CD4-positive, alpha-beta memory T cell (primary cell): ENCODE measurements at regions of chr16 and their contacts with region 1.

Region 1: DNA sequence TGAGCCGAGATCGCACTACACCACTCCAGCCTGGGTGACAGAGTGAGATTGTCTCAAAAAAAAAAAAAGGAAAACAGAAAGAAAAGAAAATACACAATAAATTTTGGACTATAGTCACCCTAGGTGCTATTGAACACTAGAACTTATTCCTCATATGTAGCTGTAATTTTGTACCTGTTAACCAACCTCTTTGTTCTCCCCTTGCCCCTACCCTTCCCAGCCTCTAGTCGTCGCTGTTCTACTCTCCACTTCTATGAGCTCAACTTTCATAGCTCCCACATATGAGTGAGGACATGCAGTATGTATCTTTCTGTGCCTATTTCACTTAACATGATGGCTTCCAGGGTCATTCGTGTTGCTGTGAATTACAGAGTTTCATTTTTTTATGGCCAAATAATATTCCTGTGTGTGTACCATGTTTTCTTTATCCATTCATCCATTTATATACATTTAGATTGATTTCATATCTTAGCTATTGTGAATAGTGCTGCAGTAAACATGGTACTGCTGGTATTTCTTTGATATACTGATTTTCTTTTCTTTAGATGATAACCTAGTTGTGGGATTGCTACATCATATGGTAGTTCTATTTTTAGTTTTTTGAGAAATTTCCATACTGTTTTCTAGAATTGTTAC is 28.3 kb downstream of the VPS35L start:
- DNase-seq: peak in 4 of 5 donors; percentile 28 to 38 (median 30)
- H3K4me3 ChIP-seq: no peak overlapping the region
- H3K4me3 Mint-ChIP-seq: no peak overlapping the region
- H3K27ac ChIP-seq: no peak overlapping the region
- H3K27ac Mint-ChIP-seq: peak overlapping the region in 1 of 7 donors; percentile 43
- H3K4me1 ChIP-seq: no peaks in the 10 kb centered on the region
- H3K4me1 Mint-ChIP-seq: peaks cover 0 to 3% (median 0%) of the 10 kb centered on the region in 4 donors
- H3K27me3 ChIP-seq: no peaks in the 10 kb centered on the region
- H3K27me3 Mint-ChIP-seq: no peaks in the 10 kb centered on the region

Region 2: DNA sequence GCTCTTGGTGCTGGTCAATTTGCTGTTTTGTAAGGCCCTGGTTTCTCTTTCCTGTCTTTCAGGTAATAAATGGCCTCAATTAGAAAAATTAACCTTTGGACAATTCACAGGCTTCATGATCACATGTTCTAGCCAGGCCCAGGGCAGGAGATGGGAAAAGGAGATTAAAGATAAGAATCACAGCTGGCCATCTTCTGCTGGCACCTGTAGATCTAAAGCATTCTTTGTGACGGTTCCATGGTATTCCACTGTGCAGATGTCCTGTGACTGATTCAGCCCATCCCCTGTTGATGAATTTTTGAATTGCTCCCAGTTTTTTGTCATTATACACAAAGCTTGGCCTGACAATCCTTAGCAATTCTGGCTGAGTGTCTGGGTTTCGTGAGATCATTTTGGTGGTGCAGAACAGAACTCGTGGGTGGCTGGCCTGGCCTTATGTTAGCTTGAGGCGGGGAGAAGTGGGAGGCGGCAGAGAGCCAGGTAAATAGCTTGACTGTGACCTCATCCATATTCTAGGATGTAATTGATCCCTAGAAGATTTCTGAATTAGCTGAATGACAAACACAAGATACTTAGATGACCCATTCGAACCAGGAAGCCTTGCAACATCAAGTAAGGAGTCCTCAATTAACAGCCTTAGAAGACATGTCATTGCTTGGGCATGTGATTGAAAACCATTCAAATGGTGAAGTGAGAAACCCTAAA is 152.0 kb before region 1 on chr16:
- CTCF ChIA-PET with region 1: no interaction called
- POLR2A ChIA-PET with region 1: no interaction called
- intact Hi-C with region 1: no loop called
- DNase-seq: no peak
- H3K4me3 ChIP-seq: no peak overlapping the region
- H3K4me3 Mint-ChIP-seq: no peak overlapping the region
- H3K27ac ChIP-seq: no peak overlapping the region
- H3K27ac Mint-ChIP-seq: no peak overlapping the region
- H3K4me1 ChIP-seq: no peaks in the 10 kb centered on the region
- H3K4me1 Mint-ChIP-seq: peaks cover 0 to 3% (median under 1%) of the 10 kb centered on the region in 4 donors
- H3K27me3 ChIP-seq: no peaks in the 10 kb centered on the region
- H3K27me3 Mint-ChIP-seq: peaks cover 5 to 6% of the 10 kb centered on the region in 2 donors

Region 3: DNA sequence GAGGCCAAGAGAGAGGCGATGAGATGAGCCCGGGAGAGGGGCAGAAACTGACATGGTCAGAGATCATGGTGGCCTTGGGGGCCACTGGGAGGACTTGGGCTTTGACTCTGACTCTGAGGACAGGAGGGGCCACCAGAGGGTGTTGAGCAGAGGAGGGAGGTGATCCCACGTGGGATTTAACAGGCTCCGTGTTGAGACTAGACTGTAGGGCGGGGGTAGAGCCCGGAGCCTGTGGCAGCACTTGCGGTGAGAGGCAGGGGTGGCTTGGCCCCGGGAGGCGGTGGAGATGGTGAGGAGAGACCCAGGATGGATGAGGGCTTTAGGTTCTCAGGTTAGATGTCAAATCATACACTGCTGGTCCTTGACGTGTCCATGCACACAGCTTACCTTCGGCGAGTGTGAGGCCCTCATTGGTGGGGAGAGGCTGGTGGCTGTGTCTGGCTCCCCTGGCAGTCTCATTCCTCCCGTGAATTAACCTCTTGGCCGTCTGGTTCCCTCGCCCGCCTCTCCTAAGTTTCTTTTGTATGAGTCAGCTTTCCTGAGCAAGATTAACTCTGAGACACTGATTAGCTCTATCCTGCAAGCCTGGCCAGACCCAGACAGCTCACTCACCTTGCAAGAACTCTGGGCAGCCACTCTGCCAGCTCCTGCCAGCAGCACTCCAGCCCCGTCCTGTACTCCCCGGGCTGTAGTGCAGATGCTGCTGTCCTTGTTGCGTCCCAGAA is 11.4 kb after region 1 on chr16:
- CTCF ChIA-PET with region 1: interaction called, 35 read pairs
- POLR2A ChIA-PET with region 1: no interaction called
- intact Hi-C with region 1: no loop called
- DNase-seq: no peak
- H3K4me3 ChIP-seq: no peak overlapping the region
- H3K4me3 Mint-ChIP-seq: no peak overlapping the region
- H3K27ac ChIP-seq: no peak overlapping the region
- H3K27ac Mint-ChIP-seq: peak overlapping the region in 1 of 7 donors; percentile 8
- H3K4me1 ChIP-seq: no peaks in the 10 kb centered on the region
- H3K4me1 Mint-ChIP-seq: no peaks in the 10 kb centered on the region
- H3K27me3 ChIP-seq: no peaks in the 10 kb centered on the region
- H3K27me3 Mint-ChIP-seq: no peaks in the 10 kb centered on the region

Region 4: DNA sequence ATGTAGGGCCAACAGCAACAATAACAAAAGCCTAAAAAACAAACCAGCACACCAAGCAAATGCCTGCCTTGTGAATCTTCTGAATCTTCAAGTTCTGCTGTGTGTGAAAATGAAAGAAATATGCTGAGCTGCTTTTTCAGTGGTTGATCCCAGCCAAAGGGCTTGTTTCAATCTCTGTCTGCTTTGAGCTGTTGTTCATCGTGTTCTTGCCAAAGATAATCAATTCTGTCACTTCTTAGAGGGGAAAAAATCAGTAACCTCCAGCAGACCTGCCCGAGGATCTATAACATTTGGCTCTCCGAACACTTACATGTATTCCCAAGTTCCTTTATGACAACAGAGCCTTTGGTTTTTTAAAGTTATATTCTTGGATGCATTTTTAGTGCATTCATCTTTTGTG is 37.7 kb after region 1 on chr16:
- CTCF ChIA-PET with region 1: no interaction called
- POLR2A ChIA-PET with region 1: no interaction called
- intact Hi-C with region 1: no loop called
- DNase-seq: no peak
- H3K4me3 ChIP-seq: no peak overlapping the region
- H3K4me3 Mint-ChIP-seq: no peak overlapping the region
- H3K27ac ChIP-seq: no peak overlapping the region
- H3K27ac Mint-ChIP-seq: no peak overlapping the region
- H3K4me1 ChIP-seq: no peaks in the 10 kb centered on the region
- H3K4me1 Mint-ChIP-seq: no peaks in the 10 kb centered on the region
- H3K27me3 ChIP-seq: no peaks in the 10 kb centered on the region
- H3K27me3 Mint-ChIP-seq: no peaks in the 10 kb centered on the region

Region 5: GRCh38 chr16:19886073-19886941 is 302.5 kb after region 1 on chr16:
- CTCF ChIA-PET with region 1: interaction called, 59 read pairs
- POLR2A ChIA-PET with region 1: no interaction called
- intact Hi-C with region 1: loop called (anchors 1 kb)
- DNase-seq: peak; percentile 76 to 79 (median 76)
- H3K4me3 ChIP-seq: peak overlapping the region in 1 of 2 donors; percentile 9
- H3K4me3 Mint-ChIP-seq: peak overlapping the region; percentile 79 to 91 (median 86)
- H3K27ac ChIP-seq: no peak overlapping the region
- H3K27ac Mint-ChIP-seq: peak overlapping the region in 3 of 7 donors; percentile 60 to 89 (median 67)
- H3K4me1 ChIP-seq: peaks cover 24% of the 10 kb centered on the region
- H3K4me1 Mint-ChIP-seq: peaks cover 15 to 30% (median 23%) of the 10 kb centered on the region in 4 donors
- H3K27me3 ChIP-seq: peaks cover 12% of the 10 kb centered on the region
- H3K27me3 Mint-ChIP-seq: peaks cover 7 to 27% of the 10 kb centered on the region in 2 donors

Region 6: DNA sequence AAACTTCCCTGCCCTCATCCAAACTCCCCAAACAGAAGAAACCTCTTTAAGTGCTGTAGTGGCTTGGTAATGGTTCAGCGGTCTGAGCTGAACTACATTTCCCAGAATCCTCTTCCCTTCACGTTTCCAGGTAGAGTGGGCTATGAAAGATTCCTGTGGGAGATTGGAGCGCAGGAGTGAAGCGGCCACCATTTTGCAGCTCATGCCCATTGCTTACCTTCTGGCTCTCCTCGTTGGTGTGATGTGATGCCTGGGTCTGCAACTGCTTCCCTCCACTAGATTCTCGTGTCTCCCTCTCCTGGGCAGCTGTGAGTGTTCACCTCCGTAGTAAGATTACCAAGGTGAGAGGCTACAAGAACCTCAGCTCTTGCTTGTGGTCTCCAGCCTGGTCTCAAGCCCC is 407.8 kb after region 1 on chr16:
- CTCF ChIA-PET with region 1: no interaction called
- POLR2A ChIA-PET with region 1: no interaction called
- intact Hi-C with region 1: no loop called
- DNase-seq: no peak
- H3K4me3 ChIP-seq: no peak overlapping the region
- H3K4me3 Mint-ChIP-seq: no peak overlapping the region
- H3K27ac ChIP-seq: no peak overlapping the region
- H3K27ac Mint-ChIP-seq: no peak overlapping the region
- H3K4me1 ChIP-seq: no peaks in the 10 kb centered on the region
- H3K4me1 Mint-ChIP-seq: no peaks in the 10 kb centered on the region
- H3K27me3 ChIP-seq: no peaks in the 10 kb centered on the region
- H3K27me3 Mint-ChIP-seq: peaks cover 0 to 2% of the 10 kb centered on the region in 2 donors